Colonic mucosa (tissue), 4 donors: ENCODE measurements at regions of chr1 and their contacts with region 1.

Region 1: GRCh38 chr1:203486618-203487370 is 7.2 kb upstream of the OPTC start:
- DNase-seq: no peak
- H3K4me3 ChIP-seq: no peak overlapping the region
- H3K27ac ChIP-seq: peak overlapping the region; percentile 56
- H3K4me1 ChIP-seq: peaks cover 3% of the 10 kb centered on the region
- H3K27me3 ChIP-seq: no peaks in the 10 kb centered on the region
- CTCF ChIP-seq: no peak

Region 2: DNA sequence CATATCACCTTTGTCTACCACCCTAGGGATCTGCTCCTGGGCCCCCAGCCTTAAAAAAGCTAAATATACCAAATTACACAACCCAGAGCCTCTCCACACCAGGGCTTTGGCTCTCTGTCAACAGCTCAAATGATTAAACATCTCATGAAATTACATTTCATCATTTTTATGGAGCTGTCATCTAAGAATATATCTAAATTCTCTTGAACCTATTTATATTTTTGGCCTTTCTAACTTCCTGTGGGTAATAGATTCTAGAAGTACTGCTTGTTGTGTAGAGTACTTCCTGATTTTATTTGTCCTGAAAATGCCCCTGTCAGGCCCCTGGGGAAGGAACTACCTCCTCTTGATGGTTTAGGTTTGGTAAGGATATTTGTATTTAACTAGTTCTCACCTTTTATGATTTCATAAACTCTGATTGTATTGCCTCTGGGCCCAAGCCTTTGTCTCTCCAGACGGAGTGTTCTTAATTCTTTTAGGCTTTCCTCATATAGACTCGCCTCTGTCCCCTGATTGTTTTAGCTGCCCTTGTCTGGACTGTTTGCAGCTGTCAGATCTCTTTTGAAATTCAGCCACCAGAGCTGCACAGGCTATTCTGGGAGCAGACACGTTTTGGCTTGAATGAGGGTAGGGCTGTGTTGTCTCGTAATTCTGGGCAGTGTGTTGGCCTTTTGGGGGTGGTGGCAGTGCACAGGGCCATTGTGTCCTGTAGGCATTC is 417.6 kb before region 1 on chr1:
- intact Hi-C with region 1: no loop called
- DNase-seq: no peak
- H3K4me3 ChIP-seq: no peak overlapping the region
- H3K27ac ChIP-seq: no peak overlapping the region
- H3K4me1 ChIP-seq: no peaks in the 10 kb centered on the region
- H3K27me3 ChIP-seq: peaks cover 2% of the 10 kb centered on the region
- CTCF ChIP-seq: no peak

Region 3: DNA sequence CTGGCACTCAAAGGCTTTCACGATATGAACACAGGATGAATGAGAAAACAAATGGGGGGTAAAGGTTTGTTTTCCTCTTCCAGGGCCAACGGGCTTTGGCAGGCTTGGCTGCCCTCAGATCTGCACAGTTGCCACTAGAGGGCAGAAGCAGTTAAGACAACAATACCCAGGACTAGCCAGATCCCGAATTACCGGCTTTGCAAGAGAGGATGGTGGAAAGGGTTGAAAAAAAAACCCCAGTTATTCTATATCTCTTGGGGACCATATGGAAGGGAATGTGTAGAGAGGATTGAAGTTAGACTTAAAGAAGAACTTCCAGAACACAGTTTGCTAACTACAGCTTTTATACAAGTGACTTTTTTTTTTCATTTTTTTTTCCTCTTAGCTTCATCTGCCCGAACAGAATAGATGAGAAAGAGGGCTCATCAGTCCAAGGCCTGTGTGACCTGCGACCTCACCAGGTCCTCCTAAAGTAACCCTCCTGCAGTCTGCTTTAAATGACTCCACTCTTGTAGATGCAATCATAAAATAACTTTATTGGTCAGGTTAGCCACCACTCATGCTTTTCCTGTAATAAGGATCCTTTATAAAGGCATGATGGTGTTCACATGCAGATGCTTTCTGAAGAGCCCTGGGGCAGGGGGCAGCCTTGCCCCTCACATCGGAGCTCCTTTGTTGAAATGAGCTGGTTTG is 146.5 kb before region 1 on chr1:
- intact Hi-C with region 1: loop called (anchors 2 kb)
- DNase-seq: peak; percentile 84
- H3K4me3 ChIP-seq: no peak overlapping the region
- H3K27ac ChIP-seq: no peak overlapping the region
- H3K4me1 ChIP-seq: no peaks in the 10 kb centered on the region
- H3K27me3 ChIP-seq: no peaks in the 10 kb centered on the region
- CTCF ChIP-seq: peak; percentile 83